Posterior vena cava (tissue), 2 donors: ENCODE measurements at regions of chr1 and their contacts with region 1.

Region 1: GRCh38 chr1:168386949-168387586 is 106.4 kb downstream of the TBX19 start:
- DNase-seq: no peak

Region 2: GRCh38 chr1:168348146-168348709 is 38.8 kb before region 1 on chr1:
- intact Hi-C with region 1: no loop called
- DNase-seq: no peak

Region 3: DNA sequence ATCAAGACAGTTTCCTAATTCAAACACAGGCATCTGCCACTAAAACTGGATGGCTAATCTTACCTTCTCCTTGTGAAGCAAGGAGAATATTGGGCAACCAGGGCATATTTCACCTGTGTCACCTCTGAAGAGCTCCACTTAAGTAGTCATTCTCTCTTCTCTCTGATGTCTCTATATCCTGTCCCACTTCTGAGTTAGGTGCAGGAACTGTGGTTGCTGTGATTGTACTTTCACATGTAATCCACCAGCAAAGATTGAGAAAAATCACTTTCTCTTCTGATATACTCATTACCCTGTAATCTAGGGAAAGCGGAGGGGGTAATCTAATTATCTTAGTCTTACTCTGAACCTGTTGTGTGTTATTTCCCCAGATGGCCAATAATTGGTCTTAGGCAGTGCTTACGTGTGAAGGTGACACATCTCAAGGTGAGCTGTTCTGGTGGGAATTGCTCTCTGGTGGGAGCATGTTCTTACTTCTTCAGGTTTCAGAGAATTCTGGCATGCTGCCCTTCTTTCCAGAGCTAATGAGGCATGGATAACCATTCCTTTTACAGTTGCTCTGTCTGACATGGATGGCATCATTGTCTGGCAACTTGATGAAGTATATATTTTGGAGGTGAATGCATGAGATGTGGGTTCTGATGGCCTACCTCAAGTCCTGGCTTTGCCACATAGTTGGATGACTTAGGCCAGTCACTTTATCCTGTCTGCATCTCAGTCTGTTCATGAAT is 144.7 kb after region 1 on chr1:
- intact Hi-C with region 1: no loop called
- DNase-seq: no peak

Region 4: GRCh38 chr1:168834225-168834872 is 447.3 kb after region 1 on chr1:
- intact Hi-C with region 1: loop called in 1 of 2 experiments (anchors 5 kb)
- DNase-seq: no peak

Region 5: GRCh38 chr1:169928438-169929209 is 1541.6 kb after region 1 on chr1:
- intact Hi-C with region 1: no loop called
- DNase-seq: no peak